Activated T-helper 2 cell treated with anti-CD3 and anti-CD28 coated beads, Interferon-gamma antibody, Interleukin-2, Interleukin-4, amounts not matched to agents 10 μg/mL and 5 μg/mL and 100 μg/mL, durations not matched to agents 14 hours and 24 hours and 36 hours (primary cell): ENCODE measurements at regions of chr1 and their contacts with region 1.

Region 1: GRCh38 chr1:45583264-45583665 is 576 bp upstream of the NASP start:
- DNase-seq: peak; percentile 92
- H3K4me3 Mint-ChIP-seq: peak overlapping the region; percentile 97
- H3K27ac Mint-ChIP-seq: peak overlapping the region; percentile 98
- H3K4me1 Mint-ChIP-seq: peaks cover 24% of the 10 kb centered on the region
- H3K27me3 Mint-ChIP-seq: no peaks in the 10 kb centered on the region

Region 2: GRCh38 chr1:44799770-44800584 is 783.3 kb before region 1 on chr1 and contains the start of gene PLK3:
- intact Hi-C with region 1: loop called (anchors 10 kb)
- DNase-seq: peak; percentile 97
- H3K4me3 Mint-ChIP-seq: peak within 1 kb of the TSS; percentile 97
- H3K27ac Mint-ChIP-seq: peak within 1 kb of the TSS; percentile 99
- H3K4me1 Mint-ChIP-seq: peaks cover 23% of the 10 kb centered on the region
- H3K27me3 Mint-ChIP-seq: no peaks in the 10 kb centered on the region
- total RNA-seq, gene PLK3: 128 and 135 TPM in 2 replicates

Region 3: GRCh38 chr1:45455162-45455561 is 128.1 kb before region 1 on chr1:
- intact Hi-C with region 1: no loop called
- DNase-seq: no peak
- H3K4me3 Mint-ChIP-seq: no peak overlapping the region
- H3K27ac Mint-ChIP-seq: no peak overlapping the region
- H3K4me1 Mint-ChIP-seq: no peaks in the 10 kb centered on the region
- H3K27me3 Mint-ChIP-seq: no peaks in the 10 kb centered on the region

Region 4: DNA sequence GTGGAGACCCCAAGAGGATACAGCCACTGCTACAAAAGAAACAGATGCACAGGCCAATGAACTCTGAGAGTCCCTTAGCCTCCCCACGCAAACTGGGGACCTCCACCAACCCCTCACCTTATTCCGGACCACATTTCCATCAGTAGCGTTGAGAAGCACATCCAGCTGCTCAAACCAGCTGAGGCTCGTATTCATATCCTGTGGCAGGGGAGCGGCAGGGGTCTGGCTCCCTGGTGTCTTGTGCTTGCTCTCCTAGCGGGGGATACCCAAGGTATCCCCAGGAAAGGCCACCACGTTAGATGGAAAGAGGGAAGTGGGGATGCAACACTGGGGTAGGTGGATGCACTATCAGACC is 83.9 kb before region 1 on chr1:
- intact Hi-C with region 1: loop called (anchors 1 kb)
- DNase-seq: no peak
- H3K4me3 Mint-ChIP-seq: peak overlapping the region; percentile 87
- H3K27ac Mint-ChIP-seq: peak overlapping the region; percentile 86
- H3K4me1 Mint-ChIP-seq: peaks cover 33% of the 10 kb centered on the region
- H3K27me3 Mint-ChIP-seq: no peaks in the 10 kb centered on the region

Region 5: DNA sequence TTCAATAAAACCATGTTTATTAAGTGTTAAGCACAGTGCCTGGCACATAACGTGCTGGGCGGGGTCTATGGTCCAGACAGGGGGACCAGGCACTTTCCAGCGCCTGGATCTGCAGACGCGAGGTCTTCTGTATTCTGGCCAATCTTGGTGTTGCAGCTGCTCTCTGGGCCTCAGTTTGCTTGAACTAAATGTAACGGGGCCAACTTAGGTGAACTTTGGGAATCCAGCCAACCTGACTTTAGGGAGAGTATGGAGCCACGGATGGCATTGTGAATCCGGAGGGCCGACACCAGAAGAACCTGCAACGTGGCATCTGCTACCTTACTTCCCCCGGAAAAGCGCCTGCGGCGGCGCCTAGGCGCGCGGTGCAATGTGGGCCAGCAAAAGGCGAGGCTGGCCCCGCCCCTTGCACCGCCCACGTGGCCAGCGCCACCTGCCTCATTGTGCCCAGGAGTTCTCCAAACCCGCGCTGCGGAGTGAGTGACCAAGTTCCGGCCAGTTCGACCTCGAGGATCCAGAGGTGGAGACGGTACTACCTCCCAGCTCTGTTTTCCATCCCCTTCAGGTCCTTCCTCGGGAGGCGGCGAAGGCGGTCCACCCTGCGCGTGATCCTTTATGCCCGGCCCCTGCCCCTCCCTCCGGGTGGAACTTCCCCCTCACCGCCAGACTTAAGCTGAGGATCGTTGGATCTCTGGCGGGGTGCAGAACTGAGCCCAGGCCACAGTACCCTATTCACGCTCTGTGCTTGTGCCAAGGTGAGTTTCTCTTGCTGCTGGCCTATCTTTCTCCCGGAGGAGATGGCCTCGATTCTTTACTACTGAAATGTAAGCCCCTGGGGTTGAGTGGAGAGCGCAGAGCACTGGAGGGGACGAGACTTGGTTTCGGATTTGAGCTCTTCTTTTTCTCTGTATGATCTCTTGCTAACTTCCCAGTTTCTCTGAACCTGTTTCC is 32.6 kb before region 1 on chr1 and contains the start of gene AKR1A1:
- intact Hi-C with region 1: loop called (anchors 5 kb)
- DNase-seq: peak; percentile 84
- H3K4me3 Mint-ChIP-seq: peak within 1 kb of the TSS; percentile 96
- H3K27ac Mint-ChIP-seq: peak within 1 kb of the TSS; percentile 92
- H3K4me1 Mint-ChIP-seq: peaks cover 25% of the 10 kb centered on the region
- H3K27me3 Mint-ChIP-seq: peaks cover 3% of the 10 kb centered on the region
- total RNA-seq, gene AKR1A1: 191 and 210 TPM in 2 replicates

Region 6: GRCh38 chr1:45750298-45751038 is 167.2 kb after region 1 on chr1 and contains the start of gene IPP:
- intact Hi-C with region 1: loop called (anchors 10 kb)
- DNase-seq: peak; percentile 95
- H3K4me3 Mint-ChIP-seq: peak within 1 kb of the TSS; percentile 96
- H3K27ac Mint-ChIP-seq: peak within 1 kb of the TSS; percentile 98
- H3K4me1 Mint-ChIP-seq: peaks cover 14% of the 10 kb centered on the region
- H3K27me3 Mint-ChIP-seq: no peaks in the 10 kb centered on the region
- total RNA-seq, gene IPP: 14.7 and 15.6 TPM in 2 replicates